AG04449 (cell line): ENCODE measurements at regions of chr13 and their contacts with region 1.

Region 1: DNA sequence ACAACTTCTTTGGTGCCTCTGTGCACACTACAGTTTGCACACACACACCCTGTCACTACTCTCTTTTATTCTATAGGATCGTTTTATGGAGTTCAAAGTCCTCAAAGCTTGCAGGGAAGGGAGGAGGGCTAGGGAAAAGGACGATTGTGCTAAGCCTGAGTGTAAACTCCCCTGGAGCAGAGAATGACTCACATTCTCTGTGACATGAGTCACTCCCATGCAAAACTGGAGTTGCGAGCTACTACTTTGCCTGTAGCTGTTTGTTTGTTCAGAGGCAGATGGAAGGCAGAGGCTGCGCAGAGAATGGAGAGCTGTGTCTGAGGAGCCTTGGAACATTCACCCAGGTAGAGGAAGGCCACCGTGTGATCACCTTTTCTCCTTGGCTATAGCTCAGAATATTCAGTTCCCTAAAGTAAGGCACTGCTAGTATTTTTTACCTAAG is 80.5 kb upstream of the MBNL2 start:
- DNase-seq: peak; percentile 45
- H3K4me3 ChIP-seq: no peak overlapping the region
- CTCF ChIP-seq: no peak

Region 2: GRCh38 chr13:97124916-97125809 is 16.4 kb before region 1 on chr13:
- CTCF ChIA-PET with region 1: interaction called, 26 read pairs
- POLR2A ChIA-PET with region 1: interaction called, 4 read pairs
- DNase-seq: no peak
- H3K4me3 ChIP-seq: no peak overlapping the region
- CTCF ChIP-seq: no peak